AG04450 (cell line): ENCODE measurements at regions of chr15 and their contacts with region 1.

Region 1: DNA sequence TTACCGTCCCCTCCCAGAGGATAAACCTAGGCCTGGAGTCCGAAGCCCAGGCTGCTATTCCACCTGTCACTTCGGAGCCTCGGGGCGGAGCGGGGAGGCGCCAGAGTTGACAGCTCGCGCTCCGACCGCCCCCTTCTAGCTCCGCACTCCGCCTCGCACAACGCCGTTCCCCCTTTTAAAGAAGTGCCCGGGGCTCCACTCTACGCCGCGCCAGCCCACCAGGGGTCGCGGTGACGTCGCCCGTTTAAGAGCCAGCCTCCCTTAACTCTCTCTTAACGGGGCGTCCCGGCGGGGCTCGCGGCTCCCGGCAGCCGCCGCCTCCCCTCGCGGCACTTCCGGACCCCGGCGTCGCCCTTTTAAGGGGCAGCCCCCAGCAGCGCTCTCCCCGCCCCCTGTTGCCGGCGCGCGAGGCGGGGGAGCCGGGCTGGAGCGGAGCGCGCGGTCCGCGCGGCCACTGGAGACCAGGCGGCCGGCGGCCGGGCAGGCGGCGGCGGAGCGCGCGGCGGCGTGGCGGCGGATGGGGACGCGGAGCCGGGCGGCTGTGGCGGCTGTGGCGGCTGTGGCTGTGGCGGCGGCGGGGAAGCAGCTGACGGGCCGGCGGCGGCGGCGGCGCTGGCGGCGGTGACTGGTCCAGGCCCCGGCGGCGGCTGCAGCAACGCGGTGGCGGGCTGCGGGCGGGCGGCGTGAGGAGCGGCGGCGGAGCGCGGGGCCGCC is at the start of gene INAFM2:
- DNase-seq: peak; percentile 85
- H3K4me3 ChIP-seq: peak within 1 kb of the TSS; percentile 71
- H3K27ac ChIP-seq: no peak within 1 kb of the TSS
- H3K27me3 ChIP-seq: peaks cover 3% of the 10 kb centered on the region
- CTCF ChIP-seq: peak; percentile 67
- polyA plus RNA-seq, gene INAFM2: 10.4 and 11.4 TPM in 2 replicates

Region 2: DNA sequence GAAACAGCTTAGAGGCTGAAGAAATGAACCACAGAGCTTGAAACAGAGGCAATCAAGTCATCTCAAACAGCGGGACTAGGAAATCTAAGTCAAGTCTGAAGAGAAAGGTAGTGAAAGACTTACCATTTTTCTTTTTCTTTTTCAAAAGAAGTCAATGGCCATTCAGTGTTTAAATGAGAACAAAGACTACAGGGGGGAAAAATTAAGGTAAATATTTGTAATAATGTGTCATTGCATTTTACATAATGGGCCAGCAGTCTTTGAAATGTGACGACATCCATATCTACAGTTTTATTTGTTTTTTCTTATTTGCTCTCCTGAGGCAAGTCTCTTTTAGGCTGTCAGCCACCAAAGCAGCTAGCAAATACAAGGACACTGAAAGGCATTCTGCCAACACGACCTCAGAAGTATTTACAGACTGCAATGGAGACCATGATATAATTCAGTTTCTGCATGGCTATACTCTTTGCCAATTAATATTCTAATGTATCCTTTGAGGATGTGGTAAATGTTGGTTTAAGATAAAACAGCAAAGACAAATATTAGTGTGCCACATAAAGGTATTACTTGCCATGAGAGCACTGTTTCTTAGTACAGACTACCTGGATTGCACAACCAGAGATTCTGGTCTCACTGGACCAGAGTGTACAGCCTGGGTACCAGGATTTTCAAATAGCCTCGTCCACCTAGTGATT is 1049.5 kb before region 1 on chr15:
- CTCF ChIA-PET with region 1: no interaction called
- POLR2A ChIA-PET with region 1: no interaction called
- DNase-seq: no peak
- H3K4me3 ChIP-seq: no peak overlapping the region
- H3K27ac ChIP-seq: no peak overlapping the region
- H3K27me3 ChIP-seq: no peaks in the 10 kb centered on the region
- CTCF ChIP-seq: no peak

Region 3: DNA sequence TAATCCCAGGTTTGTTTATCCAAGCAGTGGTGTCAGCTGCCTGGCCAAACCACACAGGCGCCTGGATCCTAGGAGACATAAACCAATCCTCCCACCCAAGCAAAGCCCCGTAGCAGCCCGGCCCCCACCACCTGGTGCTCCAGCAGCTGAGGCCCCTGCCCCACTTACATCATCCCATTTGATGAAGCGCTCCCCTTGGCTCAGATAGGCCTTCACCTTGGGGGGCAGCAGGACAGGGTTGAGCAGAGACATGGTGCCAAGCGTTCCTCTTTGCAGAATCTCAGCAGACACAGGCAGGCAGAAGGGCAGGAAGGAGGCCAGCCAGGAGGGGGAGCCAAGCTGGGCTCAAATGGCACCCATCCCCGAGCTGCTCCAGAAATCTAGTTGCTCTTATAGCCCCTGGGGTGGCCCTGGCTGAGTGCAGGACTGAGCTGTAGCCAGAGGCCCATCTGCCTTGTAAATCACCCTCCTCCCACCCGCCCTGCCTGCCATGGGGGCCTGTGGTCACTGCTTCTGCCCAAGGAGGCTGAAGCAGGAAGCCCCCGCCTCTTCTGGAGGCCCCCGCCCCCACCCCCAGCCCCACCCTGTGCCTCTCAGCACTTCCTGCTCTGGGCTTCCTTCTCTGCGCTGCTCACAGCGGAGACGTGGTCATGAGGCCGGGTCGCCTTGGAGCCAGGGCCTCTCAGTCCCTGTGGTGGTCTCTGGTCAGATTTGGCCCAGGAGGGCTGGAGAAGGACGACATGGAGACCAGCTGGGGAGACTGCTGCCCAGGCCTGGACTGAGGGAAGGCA is 15.8 kb before region 1 on chr15 and contains the start of gene PLCB2:
- CTCF ChIA-PET with region 1: interaction called, 28 read pairs
- POLR2A ChIA-PET with region 1: no interaction called
- DNase-seq: no peak
- H3K4me3 ChIP-seq: no peak within 1 kb of the TSS
- H3K27ac ChIP-seq: no peak within 1 kb of the TSS
- H3K27me3 ChIP-seq: peaks cover 63% of the 10 kb centered on the region
- CTCF ChIP-seq: peak; percentile 44
- polyA plus RNA-seq, gene PLCB2: 0.24 and 0.32 TPM in 2 replicates

Region 4: GRCh38 chr15:40338041-40338657 is 14.8 kb after region 1 on chr15:
- CTCF ChIA-PET with region 1: interaction called, 85 read pairs
- POLR2A ChIA-PET with region 1: interaction called, 101 read pairs
- DNase-seq: no peak
- H3K4me3 ChIP-seq: peak overlapping the region; percentile 70
- H3K27ac ChIP-seq: peak overlapping the region; percentile 97
- H3K27me3 ChIP-seq: no peaks in the 10 kb centered on the region
- CTCF ChIP-seq: peak; percentile 66

Region 5: GRCh38 chr15:40397688-40398412 is 74.5 kb after region 1 on chr15:
- CTCF ChIA-PET with region 1: no interaction called
- POLR2A ChIA-PET with region 1: interaction called, 13 read pairs
- DNase-seq: no peak
- H3K4me3 ChIP-seq: no peak overlapping the region
- H3K27ac ChIP-seq: no peak overlapping the region
- H3K27me3 ChIP-seq: no peaks in the 10 kb centered on the region
- CTCF ChIP-seq: no peak

Region 6: GRCh38 chr15:40421246-40422157 is 98.1 kb after region 1 on chr15:
- CTCF ChIA-PET with region 1: interaction called, 16 read pairs
- POLR2A ChIA-PET with region 1: no interaction called
- DNase-seq: no peak
- H3K4me3 ChIP-seq: peak overlapping the region; percentile 34; the same call in 1 of the 2 replicates
- H3K27ac ChIP-seq: no peak overlapping the region
- H3K27me3 ChIP-seq: peaks cover 2% of the 10 kb centered on the region
- CTCF ChIP-seq: peak; percentile 97